MCF 10A (cell line): ENCODE measurements at regions of chr22 and their contacts with region 1.

Region 1: GRCh38 chr22:19143967-19144400 is 467 bp downstream of the ESS2 start:
- DNase-seq: no peak
- H3K4me3 Mint-ChIP-seq: peak overlapping the region; percentile 100
- H3K27ac Mint-ChIP-seq: peak overlapping the region; percentile 99
- H3K4me1 Mint-ChIP-seq: peaks cover 11% of the 10 kb centered on the region
- H3K27me3 Mint-ChIP-seq: no peaks in the 10 kb centered on the region
- CTCF ChIP-seq: no peak

Region 2: DNA sequence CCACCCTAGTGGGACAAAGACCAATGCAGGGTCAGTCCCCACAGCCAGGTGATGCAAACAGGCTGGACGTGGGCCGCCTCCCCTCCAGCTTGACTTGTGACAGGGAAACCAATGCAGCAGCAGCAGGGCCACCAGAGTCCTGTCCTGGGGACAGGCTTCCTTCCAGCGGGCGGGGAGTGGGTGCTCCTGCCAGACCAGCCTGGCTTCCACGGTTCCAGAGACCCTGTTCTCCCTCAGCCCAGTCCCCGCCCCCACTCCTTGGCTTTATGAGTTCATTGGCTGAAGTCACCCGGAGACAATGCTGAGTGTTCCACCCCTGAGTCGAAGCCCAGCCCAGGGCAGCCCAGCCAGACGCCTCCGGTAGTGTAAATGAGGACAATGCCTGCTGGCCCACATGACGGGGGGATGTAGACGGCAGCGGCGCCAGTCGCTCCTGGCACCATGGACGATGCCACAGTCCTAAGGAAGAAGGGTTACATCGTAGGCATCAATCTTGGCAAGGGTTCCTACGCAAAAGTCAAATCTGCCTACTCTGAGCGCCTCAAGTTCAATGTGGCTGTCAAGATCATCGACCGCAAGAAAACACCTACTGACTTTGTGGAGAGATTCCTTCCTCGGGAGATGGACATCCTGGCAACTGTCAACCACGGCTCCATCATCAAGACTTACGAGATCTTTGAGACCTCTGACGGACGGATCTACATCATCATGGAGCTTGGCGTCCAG is 12.9 kb before region 1 on chr22 and contains the start of gene TSSK2:
- CTCF ChIA-PET with region 1: interaction called, 7 read pairs
- POLR2A ChIA-PET with region 1: interaction called, 18 read pairs
- intact Hi-C with region 1: no loop called
- DNase-seq: no peak
- H3K4me3 Mint-ChIP-seq: no peak within 1 kb of the TSS
- H3K27ac Mint-ChIP-seq: no peak within 1 kb of the TSS
- H3K4me1 Mint-ChIP-seq: peaks cover 11% of the 10 kb centered on the region
- H3K27me3 Mint-ChIP-seq: no peaks in the 10 kb centered on the region
- CTCF ChIP-seq: no peak
- total RNA-seq, gene TSSK2: not detected in 2 replicates